Activated B cell treated with CpG ODN at 0.5 μM for 24 hours (primary cell): ENCODE measurements at regions of chr2 and their contacts with region 1.

Region 1: DNA sequence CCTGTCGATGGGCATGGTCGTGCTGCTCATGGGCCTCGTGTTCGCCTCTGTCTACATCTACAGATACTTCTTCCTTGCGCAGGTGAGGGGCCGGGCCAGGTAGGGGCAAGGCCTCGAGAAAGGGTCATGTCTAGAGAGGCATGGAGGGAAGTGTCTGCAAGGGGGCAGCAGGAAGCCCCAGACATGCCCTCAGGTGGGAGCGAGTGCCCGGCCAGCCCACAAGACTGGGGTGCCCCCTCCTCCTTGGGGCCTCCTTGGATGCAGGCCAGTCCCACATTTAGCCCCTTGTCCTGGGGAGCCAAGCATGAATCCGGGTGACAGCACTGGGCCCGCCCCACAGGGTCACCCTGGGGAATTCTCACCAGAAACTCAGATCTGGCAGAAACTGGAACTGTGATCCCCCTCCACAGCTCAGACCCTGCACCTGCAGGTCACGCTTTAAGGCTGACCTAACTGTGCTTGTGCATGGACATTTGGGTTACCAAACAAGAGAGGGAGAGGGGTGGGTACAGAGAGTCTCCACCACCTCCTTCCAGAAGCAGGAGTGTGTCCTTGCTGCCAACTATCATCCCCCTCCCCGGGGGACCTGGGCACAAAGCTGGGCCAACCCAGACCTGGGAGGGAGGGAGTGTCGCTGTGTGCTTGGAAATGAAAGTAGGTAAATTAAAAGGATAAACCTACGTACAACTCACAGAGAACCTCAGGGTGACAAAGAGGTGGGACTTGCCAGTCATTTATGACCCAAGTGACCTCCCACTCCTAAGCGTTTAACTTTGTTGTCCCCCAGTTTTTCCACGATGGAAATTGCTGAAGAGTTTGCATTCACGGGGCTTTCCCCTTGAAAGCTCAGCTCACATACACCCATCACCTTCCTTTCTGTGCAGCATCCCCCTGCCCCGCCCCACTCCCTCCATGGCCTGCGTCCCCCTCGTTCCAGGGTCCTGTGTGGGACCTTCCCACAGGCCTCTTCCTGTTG is 9.0 kb downstream of the ITM2C start:
- DNase-seq: peak; percentile 71
- ATAC-seq: peak; percentile 83
- H3K4me3 Mint-ChIP-seq: peak overlapping the region; percentile 76
- H3K27ac Mint-ChIP-seq: peak overlapping the region; percentile 93
- H3K4me1 Mint-ChIP-seq: peaks cover 89% of the 10 kb centered on the region
- H3K27me3 Mint-ChIP-seq: no peaks in the 10 kb centered on the region
- CTCF ChIP-seq: no peak

Region 2: DNA sequence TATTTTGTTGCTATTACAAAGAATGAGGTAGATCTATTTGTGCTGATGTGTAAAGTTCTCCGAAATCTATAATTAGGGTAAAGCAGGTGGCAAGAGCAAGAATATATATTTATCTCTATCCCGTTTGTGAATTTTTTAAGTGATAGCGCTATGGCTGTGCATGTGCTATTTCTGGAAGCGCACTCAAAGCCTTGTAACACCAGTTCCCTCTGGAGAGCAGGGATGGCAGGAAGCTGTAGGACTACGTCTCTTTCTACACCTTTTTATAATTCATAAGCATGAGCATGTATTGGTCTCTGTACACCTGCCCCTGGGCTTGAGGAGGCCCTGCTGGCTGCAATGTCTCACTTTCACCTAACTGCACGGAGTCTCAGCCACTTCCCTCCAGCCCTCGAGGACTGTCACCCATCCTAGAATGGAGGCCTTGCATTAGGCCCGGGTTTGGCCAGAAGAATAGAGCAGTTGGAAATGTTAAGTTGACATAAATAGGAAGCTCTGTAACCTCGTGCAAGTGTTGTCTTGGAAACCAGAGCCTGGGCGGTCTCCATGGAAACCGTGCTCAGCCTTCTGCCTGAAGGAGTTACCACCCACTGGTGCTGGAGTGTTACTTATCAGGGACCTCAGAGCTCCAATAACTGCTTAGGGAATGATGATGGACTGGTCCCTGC is 11.8 kb after region 1 on chr2:
- CTCF ChIA-PET with region 1: no interaction called
- POLR2A ChIA-PET with region 1: no interaction called
- intact Hi-C with region 1: loop called (anchors 1 kb)
- DNase-seq: no peak
- ATAC-seq: peak; percentile 45
- H3K4me3 Mint-ChIP-seq: no peak overlapping the region
- H3K27ac Mint-ChIP-seq: no peak overlapping the region
- H3K4me1 Mint-ChIP-seq: peaks cover 23% of the 10 kb centered on the region
- H3K27me3 Mint-ChIP-seq: peaks cover 3% of the 10 kb centered on the region
- CTCF ChIP-seq: no peak

Region 3: DNA sequence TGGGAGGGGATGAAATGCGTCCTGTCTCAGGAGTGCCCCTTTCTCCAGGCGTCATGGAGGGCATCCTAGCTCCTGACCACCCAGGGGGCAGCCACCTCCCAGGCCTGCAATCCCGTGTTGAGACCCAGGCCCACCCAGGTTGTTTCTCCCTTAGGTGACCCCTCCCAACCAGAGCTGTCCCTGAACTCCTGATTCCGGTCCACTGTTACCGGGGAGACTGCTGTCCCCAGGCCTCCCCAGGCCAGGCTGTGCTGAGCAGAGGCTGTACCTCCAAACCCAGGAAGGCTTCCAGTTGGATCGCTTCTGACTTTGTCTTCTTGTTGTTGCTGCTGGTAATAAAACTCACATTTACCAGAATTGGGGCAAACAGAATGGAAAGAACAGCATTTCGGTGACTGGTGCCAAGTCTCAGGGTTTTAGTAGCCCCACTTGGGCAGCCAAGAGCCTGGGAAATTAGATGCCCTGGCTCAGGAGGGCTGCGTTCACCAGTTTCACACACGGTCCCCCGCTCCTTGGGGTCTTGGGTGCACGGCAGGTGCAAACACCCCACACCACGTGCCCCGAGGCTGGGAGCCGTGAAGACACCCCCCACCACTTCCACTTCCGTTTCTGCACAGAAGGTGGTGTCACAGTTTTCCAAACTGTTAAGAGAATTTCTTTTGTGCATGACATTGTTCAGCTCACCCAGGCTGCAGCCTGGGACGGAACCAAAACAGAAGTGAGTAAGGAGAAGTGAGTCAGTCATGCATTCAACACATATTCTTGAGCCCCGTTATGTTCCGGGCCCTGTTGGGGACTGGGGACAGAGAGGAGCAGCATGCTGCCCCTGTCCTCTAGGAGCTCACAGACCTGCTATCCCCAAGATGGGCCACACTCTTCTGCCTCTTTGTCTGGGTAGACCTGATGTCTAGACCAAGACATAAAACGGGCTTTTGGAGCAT is 20.3 kb after region 1 on chr2:
- CTCF ChIA-PET with region 1: no interaction called
- POLR2A ChIA-PET with region 1: interaction called, 9 read pairs
- intact Hi-C with region 1: loop called (anchors 2 kb)
- DNase-seq: peak; percentile 25
- ATAC-seq: peak; percentile 82
- H3K4me3 Mint-ChIP-seq: peak overlapping the region; percentile 37
- H3K27ac Mint-ChIP-seq: peak overlapping the region; percentile 46
- H3K4me1 Mint-ChIP-seq: peaks cover 50% of the 10 kb centered on the region
- H3K27me3 Mint-ChIP-seq: peaks cover 3% of the 10 kb centered on the region
- CTCF ChIP-seq: no peak